GM10248 (cell line): ENCODE measurements at regions of chr1 and their contacts with region 1.

Region 1: DNA sequence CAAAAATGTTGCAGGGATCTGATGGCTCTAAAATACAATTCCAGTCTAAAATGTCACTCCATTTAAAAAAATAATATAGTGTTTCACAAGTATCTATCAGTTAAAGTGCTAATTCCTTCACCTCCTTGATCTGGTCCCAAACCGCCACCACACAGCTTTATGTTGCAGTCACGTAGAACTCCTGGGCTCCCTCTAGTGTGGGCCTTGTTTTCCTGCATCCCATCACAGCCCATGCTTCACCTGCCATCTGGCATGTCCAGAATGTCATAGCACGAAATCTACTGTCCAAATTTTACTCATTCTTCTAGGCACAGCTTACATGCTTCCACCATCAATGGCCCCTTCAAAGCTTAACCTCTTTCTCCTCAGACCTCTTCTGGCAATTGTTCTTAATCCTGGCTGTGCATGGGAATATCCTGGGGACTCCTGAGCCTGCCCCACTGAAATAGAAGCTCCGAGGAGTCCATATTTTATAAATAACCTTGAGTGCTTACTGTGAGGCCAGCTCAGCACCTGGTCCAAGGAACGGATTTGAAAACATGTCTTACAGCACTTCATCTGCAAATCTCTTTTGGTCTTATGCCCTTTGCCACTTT is 15.5 kb downstream of the FYB2 start:
- DNase-seq: no peak
- CTCF ChIP-seq: peak; percentile 50

Region 2: GRCh38 chr1:56773341-56774066 is 30.2 kb before region 1 on chr1:
- CTCF ChIA-PET with region 1: interaction called, 11 read pairs
- POLR2A ChIA-PET with region 1: no interaction called
- DNase-seq: no peak
- CTCF ChIP-seq: no peak

Region 3: DNA sequence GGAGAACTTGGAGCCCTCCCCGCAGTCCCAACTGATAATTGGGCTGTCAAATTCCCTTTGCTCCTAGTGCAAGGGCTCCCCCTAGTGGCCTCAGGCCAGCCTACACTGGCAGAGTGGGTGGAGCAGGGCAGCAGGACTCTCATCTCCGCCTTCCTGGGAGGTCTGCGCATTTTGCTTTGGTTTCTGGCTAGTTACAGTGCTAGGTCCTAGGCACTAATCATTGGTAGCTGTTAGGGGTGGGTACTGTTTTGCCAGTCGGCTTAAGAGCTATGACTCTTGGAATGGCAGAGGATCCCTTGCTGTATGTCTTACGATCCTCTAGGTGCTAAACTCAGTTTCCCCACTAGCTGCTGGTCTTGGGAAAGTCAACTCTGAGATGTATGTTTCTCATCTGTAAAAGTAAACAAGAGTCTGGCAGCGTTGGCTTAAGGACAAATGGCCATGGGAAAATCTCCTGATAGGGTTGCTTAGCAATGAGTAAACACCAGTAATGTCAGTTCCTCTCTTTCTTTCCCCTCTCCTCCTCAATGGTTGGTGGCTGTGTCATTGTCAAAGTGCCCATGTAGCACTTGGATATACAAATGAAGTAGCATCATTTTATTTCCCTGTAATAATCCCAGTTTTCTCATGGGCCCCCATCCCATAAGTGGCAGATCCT is 17.6 kb after region 1 on chr1:
- CTCF ChIA-PET with region 1: interaction called, 46 read pairs
- POLR2A ChIA-PET with region 1: no interaction called
- DNase-seq: peak; percentile 80
- CTCF ChIP-seq: peak; percentile 96